ENCODE measurements at regions of chr18 and their contacts with region 1.

Region 1: GRCh38 chr18:77114415-77115191 is 18.0 kb downstream of the MBP start:
- DNase-seq: peak; percentile 84 to 96
- ATAC-seq: peak; percentile 91 to 92
- H3K4me3 ChIP-seq: no peak overlapping the region
- H3K27ac ChIP-seq: peak overlapping the region; percentile 92 to 93
- H3K4me1 ChIP-seq: peaks cover 56% of the 10 kb centered on the region
- CTCF ChIP-seq: no peak
- EP300 ChIP-seq: peak; percentile 51 to 75; a peak in 3 of 5 replicates
- POLR2A ChIP-seq: no peak
- RAD21 ChIP-seq: no peak; a peak in 1 of 5 replicates

Region 2: DNA sequence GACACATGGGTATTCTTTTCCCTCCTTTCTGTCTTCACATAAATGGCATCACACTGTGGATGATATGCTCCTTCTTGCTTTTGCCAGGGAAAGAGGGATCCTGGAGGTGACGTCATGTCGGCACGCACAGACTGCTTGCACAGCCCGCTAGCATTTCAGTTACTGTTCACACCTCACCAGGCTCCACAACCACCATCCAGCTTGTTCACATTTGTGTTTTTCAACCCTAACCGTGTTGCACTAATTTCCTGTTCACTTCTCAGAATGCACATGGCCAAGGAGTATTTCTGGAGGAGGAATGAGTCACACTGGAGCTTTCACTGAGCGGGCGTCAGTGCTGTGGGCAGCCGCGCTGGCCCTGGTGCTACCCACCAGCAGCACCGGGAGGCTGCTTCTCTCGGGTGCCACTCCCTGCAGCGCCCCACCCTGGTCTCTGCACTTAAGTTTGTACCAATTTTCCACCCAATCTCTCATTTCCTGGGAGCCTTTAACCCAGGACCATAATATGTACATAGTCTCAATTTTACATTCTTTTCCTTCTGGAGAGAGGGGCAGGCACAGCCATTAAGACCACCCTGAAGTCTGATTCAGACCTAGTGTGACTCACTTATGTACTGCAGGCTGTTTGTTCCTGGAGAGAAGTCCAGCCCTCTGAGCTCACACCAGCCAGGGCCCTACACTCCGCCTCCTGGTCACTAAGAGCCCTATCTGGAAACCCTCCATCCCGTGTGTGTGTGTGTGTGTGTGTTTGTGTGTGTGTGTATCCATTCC is 47.1 kb before region 1 on chr18:
- CTCF ChIA-PET with region 1: interaction called, 5 read pairs
- POLR2A ChIA-PET with region 1: interaction called, 10 read pairs
- DNase-seq: peak; percentile 55 to 93
- ATAC-seq: peak; percentile 81 to 89
- H3K4me3 ChIP-seq: no peak overlapping the region
- H3K27ac ChIP-seq: peak overlapping the region; percentile 92 to 95
- H3K4me1 ChIP-seq: peaks cover 80% of the 10 kb centered on the region
- CTCF ChIP-seq: no peak
- EP300 ChIP-seq: peak; percentile 61 to 66; a peak in 2 of 5 replicates
- POLR2A ChIP-seq: no peak
- RAD21 ChIP-seq: peak in 1 of 2 experiments; percentile 10; a peak in 2 of 5 replicates

Region 3: GRCh38 chr18:77079954-77080682 is 34.5 kb before region 1 on chr18:
- CTCF ChIA-PET with region 1: no interaction called
- POLR2A ChIA-PET with region 1: no interaction called
- DNase-seq: no peak
- ATAC-seq: no peak
- H3K4me3 ChIP-seq: no peak overlapping the region
- H3K27ac ChIP-seq: 0 out of 6 replicates have a peak overlapping the region, but pooled peaks of 1 of the 2 experiments have one; percentile 46
- H3K4me1 ChIP-seq: peaks cover 39% of the 10 kb centered on the region
- CTCF ChIP-seq: no peak
- EP300 ChIP-seq: no peak
- POLR2A ChIP-seq: no peak
- RAD21 ChIP-seq: no peak

Region 4: GRCh38 chr18:77101410-77102258 is 13.0 kb before region 1 on chr18:
- CTCF ChIA-PET with region 1: interaction called, 3 read pairs
- POLR2A ChIA-PET with region 1: interaction called, 13 read pairs
- DNase-seq: peak; percentile 86 to 90
- ATAC-seq: peak; percentile 94 to 95
- H3K4me3 ChIP-seq: peak overlapping the region; percentile 19
- H3K27ac ChIP-seq: peak overlapping the region; percentile 96 to 97
- H3K4me1 ChIP-seq: peaks cover 57% of the 10 kb centered on the region
- CTCF ChIP-seq: no peak
- EP300 ChIP-seq: no peak; a peak in 1 of 5 replicates
- POLR2A ChIP-seq: no peak
- RAD21 ChIP-seq: peak; percentile 9 to 33; a peak in 2 of 5 replicates

Measured in A549 (cell line).